GM23248 (cell line): ENCODE measurements at regions of chr9 and their contacts with region 1.

Region 1: DNA sequence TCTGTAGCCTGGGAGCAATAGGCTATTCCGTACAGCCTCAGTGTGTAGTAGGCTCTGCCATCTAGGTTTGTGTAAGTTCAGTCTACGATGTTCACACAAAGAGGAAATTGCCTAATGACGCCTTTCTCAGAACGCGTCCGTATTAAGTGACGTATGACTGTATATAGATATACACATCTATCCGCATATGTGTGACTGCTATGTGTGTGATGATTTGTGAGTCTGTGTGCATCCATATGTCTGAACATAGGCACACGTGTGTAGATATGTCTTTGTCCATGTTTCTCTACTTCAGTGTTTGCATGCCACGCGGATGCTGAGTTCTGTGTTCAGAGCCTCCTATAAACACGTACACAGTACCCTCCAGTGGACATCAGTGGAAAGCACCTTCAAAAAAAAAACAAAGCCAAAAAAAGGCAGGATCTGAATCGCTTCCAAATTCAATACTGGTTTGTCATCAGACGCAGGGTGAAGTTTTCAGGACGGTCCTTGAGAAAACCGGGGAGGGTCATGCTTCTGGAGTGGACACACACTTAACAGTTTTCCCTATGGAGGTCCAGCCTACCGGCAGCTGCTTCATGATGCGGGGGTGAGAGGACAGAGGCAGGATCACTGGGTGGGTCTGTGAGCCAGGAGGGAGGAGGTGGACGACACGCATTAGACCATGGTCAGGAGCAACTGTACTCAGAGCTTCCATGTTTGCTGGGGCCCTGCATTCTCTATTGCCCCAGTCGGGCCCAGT is 29.5 kb upstream of the ALDH1B1 start:
- DNase-seq: peak; percentile 92
- H3K4me3 ChIP-seq: peak overlapping the region; percentile 57
- H3K27ac ChIP-seq: no peak overlapping the region
- H3K4me1 ChIP-seq: 0 out of 2 replicates have a peak, but pooled peaks cover 3% of the 10 kb centered on the region
- H3K27me3 ChIP-seq: no peaks in the 10 kb centered on the region

Region 2: DNA sequence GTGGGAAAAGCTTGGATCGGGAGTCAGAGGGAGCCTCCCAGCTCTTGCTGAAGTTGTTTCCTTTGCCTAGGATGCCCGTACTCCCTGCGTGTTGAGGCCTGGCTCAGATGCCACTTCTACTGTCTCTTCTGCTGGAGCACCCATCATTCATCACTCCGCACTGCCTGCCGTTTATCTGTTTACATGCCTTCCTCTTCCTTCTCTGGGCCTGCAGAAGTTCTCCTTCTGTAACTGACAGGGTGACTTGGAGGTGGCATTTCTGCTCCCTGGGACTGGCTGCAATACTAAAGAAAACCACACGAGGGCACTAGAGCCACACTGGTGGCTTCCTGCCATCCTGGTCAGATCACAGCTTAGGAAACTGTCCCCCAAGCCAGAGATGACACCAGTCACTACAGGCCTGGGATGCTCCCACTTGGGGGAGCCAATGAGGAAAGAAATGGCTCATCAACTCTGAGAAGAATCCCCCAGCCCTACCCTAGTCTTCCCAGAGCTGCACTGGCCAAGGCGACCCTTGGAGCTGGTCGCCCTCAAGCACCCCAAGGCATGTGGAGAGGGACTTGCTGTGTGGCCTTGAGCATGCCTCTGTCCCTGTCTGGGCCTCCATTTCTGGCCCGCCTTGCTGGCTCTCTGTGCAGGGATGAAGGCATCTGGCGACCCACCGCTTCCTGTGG is 449.4 kb before region 1 on chr9:
- in situ Hi-C with region 1: loop called (anchors 5 kb)
- DNase-seq: peak; percentile 77
- H3K4me3 ChIP-seq: no peak overlapping the region
- H3K27ac ChIP-seq: no peak overlapping the region
- H3K4me1 ChIP-seq: peaks cover 4% of the 10 kb centered on the region
- H3K27me3 ChIP-seq: no peaks in the 10 kb centered on the region

Region 3: DNA sequence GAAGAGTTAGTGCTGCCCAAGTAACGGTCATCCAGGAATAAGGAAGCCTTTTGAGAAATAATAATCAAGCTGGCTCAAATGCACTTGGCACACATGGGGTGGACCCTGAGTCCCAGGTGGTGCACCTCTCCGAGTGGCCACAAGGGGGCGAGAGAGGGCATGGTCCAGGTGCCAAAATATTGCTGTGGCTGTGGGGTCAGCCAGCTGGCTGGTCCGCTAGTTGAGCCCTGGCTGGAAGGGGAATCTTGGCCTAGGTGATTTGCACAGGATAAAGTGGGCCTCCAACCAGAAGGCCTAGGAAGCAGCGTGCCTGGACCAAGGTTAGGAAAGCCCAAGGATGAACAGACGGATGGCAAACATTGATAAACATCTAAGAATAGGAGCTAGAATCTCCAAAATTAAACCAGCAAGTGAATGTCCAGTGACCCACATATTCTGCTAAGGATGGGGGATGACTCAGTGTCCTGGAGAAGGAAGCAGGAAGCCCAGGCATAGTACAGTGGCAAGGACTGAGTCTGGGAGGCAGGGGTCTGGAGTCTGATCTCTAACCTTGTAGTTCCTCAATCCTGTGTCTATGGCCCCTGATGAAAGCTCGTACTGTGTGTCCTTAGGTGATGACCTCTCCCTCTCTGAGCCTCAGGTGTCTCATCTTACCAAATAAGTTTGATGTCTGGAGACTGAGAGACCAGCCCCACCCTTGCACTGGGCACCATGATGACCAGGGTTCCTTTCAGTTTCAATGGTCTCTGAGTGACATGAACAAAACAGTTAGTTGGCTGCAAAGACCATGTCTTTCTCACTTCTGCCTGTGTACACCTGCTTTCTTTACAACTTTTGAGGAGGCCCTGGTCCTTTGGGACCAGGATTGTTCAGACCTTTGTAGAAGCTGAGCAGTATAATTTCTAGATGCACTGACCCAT is 274.8 kb before region 1 on chr9:
- in situ Hi-C with region 1: loop called (anchors 10 kb)
- DNase-seq: peak; percentile 57
- H3K4me3 ChIP-seq: no peak overlapping the region
- H3K27ac ChIP-seq: no peak overlapping the region
- H3K4me1 ChIP-seq: no peaks in the 10 kb centered on the region; the same call in 1 of the 2 replicates
- H3K27me3 ChIP-seq: no peaks in the 10 kb centered on the region; the same call in 1 of the 2 replicates

Region 4: DNA sequence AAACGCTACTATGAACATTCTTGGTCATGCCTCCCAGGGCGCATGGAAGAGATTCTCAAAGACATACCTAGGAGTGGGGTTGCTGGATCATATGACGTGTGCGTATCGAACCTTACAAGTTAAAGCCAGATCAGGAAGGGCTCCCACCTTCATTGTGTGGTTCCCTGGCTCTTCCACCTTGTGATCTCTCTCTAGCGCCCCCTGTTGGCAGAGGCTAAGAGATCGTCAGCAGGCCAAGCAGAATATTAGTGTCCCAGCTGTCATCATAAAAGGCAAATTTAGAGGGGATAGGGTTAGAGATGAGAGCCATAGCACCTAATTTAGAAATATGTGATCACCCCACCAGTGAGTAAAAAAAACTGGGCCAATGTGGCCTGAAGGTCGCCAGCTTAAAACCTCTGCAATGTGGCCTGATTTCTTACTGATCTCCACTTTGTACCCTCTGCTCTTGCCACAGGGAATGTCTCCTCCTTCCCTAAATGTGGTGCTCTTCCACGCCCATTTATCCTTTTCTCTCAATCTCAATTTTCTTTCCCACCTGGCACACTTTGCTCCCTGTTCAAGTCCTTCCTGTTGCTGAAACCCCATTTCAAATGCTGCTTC is 202.3 kb before region 1 on chr9:
- in situ Hi-C with region 1: loop called (anchors 25 kb)
- DNase-seq: peak; percentile 72
- H3K4me3 ChIP-seq: no peak overlapping the region
- H3K27ac ChIP-seq: no peak overlapping the region
- H3K4me1 ChIP-seq: no peaks in the 10 kb centered on the region
- H3K27me3 ChIP-seq: peaks cover 8% of the 10 kb centered on the region; the same call in 1 of the 2 replicates

Region 5: DNA sequence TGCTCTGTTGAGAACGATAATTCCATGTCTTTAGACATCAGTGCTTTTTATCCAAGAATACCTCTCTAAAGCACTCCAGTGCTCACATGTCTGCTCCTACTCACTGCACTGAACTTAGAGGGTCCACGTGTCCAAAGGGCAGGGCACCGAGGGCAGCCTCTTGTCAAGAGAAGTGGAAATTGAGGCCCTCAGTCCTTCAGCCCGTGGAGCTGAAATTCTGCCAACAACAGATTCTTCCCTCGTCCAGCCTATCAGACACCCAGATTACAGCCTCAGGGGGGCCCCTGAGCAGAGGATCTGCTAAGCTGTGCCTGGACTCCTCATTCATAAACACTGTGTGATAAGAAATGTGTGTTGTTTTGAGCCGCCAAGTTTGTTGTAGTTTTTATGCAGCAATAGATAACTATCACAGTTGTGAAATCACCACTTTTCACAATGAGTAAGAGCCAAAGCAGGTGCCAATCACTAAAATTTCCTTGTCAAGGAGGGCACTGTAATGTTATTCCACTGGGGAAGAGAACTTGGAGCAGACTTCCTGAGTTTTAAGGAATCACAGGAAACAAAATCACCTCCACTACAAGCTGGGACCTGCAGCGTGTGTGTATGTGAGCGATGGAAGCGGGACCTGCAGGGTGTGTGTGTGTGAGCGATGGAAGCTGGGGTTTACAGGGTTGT is 120.0 kb after region 1 on chr9:
- in situ Hi-C with region 1: no loop called
- DNase-seq: no peak
- H3K4me3 ChIP-seq: no peak overlapping the region
- H3K27ac ChIP-seq: no peak overlapping the region
- H3K4me1 ChIP-seq: no peaks in the 10 kb centered on the region
- H3K27me3 ChIP-seq: peaks cover 14% of the 10 kb centered on the region